PC-9 (cell line): ENCODE measurements at regions of chr18 and their contacts with region 1.

Region 1: GRCh38 chr18:69935319-69936190 is 12.1 kb downstream of the CD226 start:
- DNase-seq: no peak
- H3K4me3 ChIP-seq: no peak overlapping the region
- H3K27ac ChIP-seq: no peak overlapping the region
- H3K4me1 ChIP-seq: no peaks in the 10 kb centered on the region
- H3K27me3 ChIP-seq: no peaks in the 10 kb centered on the region
- CTCF ChIP-seq: no peak

Region 2: DNA sequence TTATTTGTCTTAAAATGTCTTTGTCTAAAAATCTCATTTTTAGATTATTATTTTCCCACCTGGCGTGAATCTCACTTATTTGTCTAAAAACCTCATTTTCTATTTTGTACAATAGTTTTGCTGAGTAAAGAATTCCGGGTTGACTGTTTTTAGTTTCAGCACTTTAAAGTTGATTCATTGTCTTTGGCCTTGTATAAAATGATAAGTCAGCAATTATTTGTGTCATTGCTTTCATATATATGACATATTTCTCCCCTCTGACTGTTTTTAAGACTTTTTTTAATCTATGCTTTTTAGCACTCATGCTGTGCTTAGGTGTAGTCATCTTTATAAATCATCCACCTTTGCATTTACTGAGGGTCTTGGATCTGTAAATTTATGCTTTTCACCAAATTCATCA is 626.9 kb before region 1 on chr18:
- CTCF ChIA-PET with region 1: interaction called, 11 read pairs
- POLR2A ChIA-PET with region 1: no interaction called
- intact Hi-C with region 1: no loop called
- DNase-seq: no peak
- H3K4me3 ChIP-seq: no peak overlapping the region
- H3K27ac ChIP-seq: no peak overlapping the region
- H3K4me1 ChIP-seq: no peaks in the 10 kb centered on the region
- H3K27me3 ChIP-seq: no peaks in the 10 kb centered on the region
- CTCF ChIP-seq: no peak